H1 (cell line): ENCODE measurements at regions of chr16 and their contacts with region 1.

Region 1: GRCh38 chr16:74695450-74696422 is 4.9 kb downstream of the MLKL start:
- DNase-seq: peak; percentile 41 to 80
- H3K4me3 ChIP-seq: peak overlapping the region; percentile 23 to 56 (median 34); a peak in 5 of 8 replicates
- H3K27ac ChIP-seq: no peak overlapping the region
- H3K4me1 ChIP-seq: peaks cover 0 to 3% (median 2%) of the 10 kb centered on the region in 4 experiments; a peak in 4 of 7 replicates
- H3K27me3 ChIP-seq: peaks cover 0 to 8% (median 3%) of the 10 kb centered on the region in 4 experiments; a peak in 3 of 7 replicates
- CTCF ChIP-seq: no peak
- EP300 ChIP-seq: no peak
- POLR2A ChIP-seq: peak in 1 of 2 experiments; percentile 60; a peak in 1 of 3 replicates
- RAD21 ChIP-seq: no peak

Region 2: DNA sequence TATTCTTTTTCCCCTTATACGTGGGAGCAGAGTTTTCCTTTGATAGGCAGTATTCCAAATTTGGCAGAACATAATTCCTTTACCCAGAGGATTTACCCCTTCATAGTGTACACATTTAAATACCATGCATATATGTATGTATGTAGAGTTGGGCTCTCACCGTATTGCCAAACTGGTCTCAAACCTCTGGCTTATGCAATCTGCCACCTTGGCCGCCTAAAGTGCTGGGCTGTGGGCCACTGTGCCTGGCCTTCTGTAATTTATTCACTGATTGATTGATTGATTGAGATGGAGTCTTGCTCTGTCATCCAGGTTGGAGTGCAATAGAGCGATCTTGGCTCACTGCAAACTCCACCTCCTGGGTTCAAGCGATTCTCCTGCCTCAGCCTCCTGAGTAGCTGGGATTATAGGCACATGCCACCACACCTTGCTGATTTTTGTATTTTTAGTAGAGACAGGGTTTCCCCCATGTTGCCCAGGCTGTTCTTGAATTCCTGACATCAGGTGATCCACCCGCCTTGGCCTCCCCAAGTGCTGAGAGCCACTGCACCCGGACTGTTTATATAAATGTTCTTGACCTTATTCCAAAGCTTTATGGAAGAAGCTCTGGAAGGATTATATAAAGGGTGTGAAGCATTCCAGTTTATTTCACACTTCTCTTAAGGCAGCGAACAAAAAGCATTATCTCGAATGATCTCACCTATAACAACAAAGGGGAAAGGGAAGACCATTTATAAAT is 103.7 kb before region 1 on chr16:
- CTCF ChIA-PET with region 1: no interaction called
- POLR2A ChIA-PET with region 1: no interaction called
- DNase-seq: no peak
- H3K4me3 ChIP-seq: no peak overlapping the region
- H3K27ac ChIP-seq: no peak overlapping the region
- H3K4me1 ChIP-seq: no peaks in the 10 kb centered on the region
- H3K27me3 ChIP-seq: no peaks in the 10 kb centered on the region
- CTCF ChIP-seq: no peak
- EP300 ChIP-seq: no peak
- POLR2A ChIP-seq: no peak
- RAD21 ChIP-seq: no peak

Region 3: DNA sequence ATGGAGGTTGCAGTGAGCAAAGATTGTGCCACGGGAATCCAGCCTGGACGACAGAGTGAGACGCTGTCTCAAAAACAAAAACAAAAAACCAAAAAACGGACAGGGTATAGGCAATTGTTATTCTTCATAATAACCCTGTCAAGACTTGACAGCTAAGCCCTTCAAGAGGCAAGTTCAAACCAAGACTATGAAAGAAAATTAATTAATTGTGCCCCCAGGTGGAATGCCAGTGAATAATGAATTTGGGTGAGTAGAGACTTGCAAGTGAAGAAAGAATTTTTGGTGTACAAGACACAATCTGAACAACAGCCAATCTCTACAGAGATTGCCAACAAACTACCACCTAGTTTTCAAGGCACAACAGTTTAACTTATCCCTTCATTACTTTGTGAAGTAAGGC is 35.4 kb before region 1 on chr16:
- CTCF ChIA-PET with region 1: no interaction called
- POLR2A ChIA-PET with region 1: no interaction called
- DNase-seq: no peak
- H3K4me3 ChIP-seq: no peak overlapping the region
- H3K27ac ChIP-seq: no peak overlapping the region
- H3K4me1 ChIP-seq: peaks cover 0 to 3% (median 0%) of the 10 kb centered on the region in 4 experiments; a peak in 1 of 7 replicates
- H3K27me3 ChIP-seq: no peaks in the 10 kb centered on the region
- CTCF ChIP-seq: no peak
- EP300 ChIP-seq: no peak
- POLR2A ChIP-seq: no peak
- RAD21 ChIP-seq: no peak

Region 4: DNA sequence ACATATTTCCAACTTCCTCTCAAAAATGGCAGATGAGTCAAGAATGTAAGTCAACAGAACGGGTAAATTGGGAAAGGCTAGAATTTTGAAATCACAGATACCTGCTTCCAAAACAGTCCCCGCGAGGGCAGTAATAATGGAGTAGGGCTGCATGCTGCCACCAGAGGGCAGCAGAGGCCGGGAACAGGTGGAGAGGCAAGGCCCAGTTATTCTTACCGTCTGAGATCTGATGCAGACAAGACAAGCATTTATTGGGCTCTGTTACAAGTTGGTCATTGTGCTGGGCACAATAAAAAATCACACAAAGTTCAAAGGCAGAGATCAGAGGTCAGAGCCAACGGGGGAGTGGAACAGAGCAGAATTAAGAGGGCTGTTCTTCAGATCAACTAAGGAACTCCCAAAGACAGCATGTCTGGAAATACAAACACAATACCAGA is 13.7 kb after region 1 on chr16:
- CTCF ChIA-PET with region 1: interaction called, 11 read pairs
- POLR2A ChIA-PET with region 1: interaction called, 3 read pairs
- DNase-seq: peak; percentile 63 to 91
- H3K4me3 ChIP-seq: no peak overlapping the region
- H3K27ac ChIP-seq: no peak overlapping the region
- H3K4me1 ChIP-seq: no peaks in the 10 kb centered on the region
- H3K27me3 ChIP-seq: peaks cover 0 to 2% (median 0%) of the 10 kb centered on the region in 4 experiments; a peak in 2 of 7 replicates
- CTCF ChIP-seq: peak; percentile 92 to 98 (median 95)
- EP300 ChIP-seq: no peak
- POLR2A ChIP-seq: no peak
- RAD21 ChIP-seq: peak; percentile 96

Region 5: DNA sequence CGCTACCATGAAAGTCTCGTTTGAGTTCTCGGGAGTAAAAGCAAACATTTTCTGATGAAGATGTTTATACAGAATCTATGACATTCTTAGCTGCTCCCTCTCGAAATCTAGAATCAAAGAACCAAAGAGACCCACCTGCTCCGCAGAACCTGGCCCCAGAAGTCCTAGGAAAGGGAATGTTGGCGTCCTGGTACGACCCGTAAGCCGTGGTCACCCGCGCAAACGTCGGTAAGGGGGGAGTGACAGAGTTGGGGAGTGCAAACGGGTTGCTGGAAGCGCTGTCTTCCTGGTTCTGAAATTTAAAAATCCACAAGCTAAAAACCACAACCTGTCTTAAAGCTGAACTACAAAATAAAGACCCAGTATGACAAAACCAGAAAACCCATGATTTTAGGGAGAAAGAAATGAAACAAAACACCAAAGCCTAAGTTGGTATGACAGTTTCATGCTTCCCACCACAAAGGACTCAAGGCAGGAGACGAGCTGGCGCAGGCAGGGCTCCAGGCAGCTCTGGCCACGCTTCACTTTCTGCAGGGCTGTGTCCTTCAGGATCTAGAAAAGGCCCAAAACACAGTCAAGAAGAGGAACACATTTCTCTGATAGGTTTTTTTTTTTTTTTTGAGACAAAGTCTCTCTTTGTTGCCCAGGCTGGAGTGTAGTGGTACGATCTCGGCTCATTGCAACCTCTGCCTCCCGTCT is 213.8 kb after region 1 on chr16:
- CTCF ChIA-PET with region 1: no interaction called
- POLR2A ChIA-PET with region 1: no interaction called
- DNase-seq: no peak
- H3K4me3 ChIP-seq: no peak overlapping the region
- H3K27ac ChIP-seq: no peak overlapping the region
- H3K4me1 ChIP-seq: no peaks in the 10 kb centered on the region
- H3K27me3 ChIP-seq: no peaks in the 10 kb centered on the region
- CTCF ChIP-seq: no peak
- EP300 ChIP-seq: no peak
- POLR2A ChIP-seq: no peak
- RAD21 ChIP-seq: no peak